B cell (primary cell): ENCODE measurements at regions of chr3 and their contacts with region 1.

Region 1: GRCh38 chr3:142578327-142579223 is at the start of gene ATR:
- DNase-seq: peak; percentile 97
- ATAC-seq: peak; percentile 94
- H3K4me3 ChIP-seq: peak within 1 kb of the TSS; percentile 70 to 91 (median 78)
- H3K4me3 Mint-ChIP-seq: peak within 1 kb of the TSS; percentile 93
- H3K27ac ChIP-seq: peak within 1 kb of the TSS; percentile 97 to 98
- H3K27ac Mint-ChIP-seq: peak within 1 kb of the TSS; percentile 98
- H3K4me1 ChIP-seq: peaks cover 27% of the 10 kb centered on the region in 2 donors
- H3K4me1 Mint-ChIP-seq: peaks cover 47% of the 10 kb centered on the region
- H3K27me3 ChIP-seq: peaks cover 0 to 7% (median 0%) of the 10 kb centered on the region in 4 experiments
- H3K27me3 Mint-ChIP-seq: peaks cover 9% of the 10 kb centered on the region
- CTCF ChIP-seq: no peak
- total RNA-seq, gene ATR: 46.7 and 47.4 TPM in 2 replicates

Region 2: GRCh38 chr3:140941434-140942220 is 1636.9 kb before region 1 on chr3 and contains the start of gene SLC25A36:
- CTCF ChIA-PET with region 1: no interaction called
- POLR2A ChIA-PET with region 1: no interaction called
- intact Hi-C with region 1: loop called (anchors 10 kb)
- DNase-seq: peak; percentile 99
- ATAC-seq: peak; percentile 96
- H3K4me3 ChIP-seq: peak within 1 kb of the TSS; percentile 63 to 86 (median 80)
- H3K4me3 Mint-ChIP-seq: peak within 1 kb of the TSS; percentile 95
- H3K27ac ChIP-seq: peak within 1 kb of the TSS; percentile 91 to 95
- H3K27ac Mint-ChIP-seq: peak within 1 kb of the TSS; percentile 97
- H3K4me1 ChIP-seq: peaks cover 11 to 26% of the 10 kb centered on the region in 2 donors
- H3K4me1 Mint-ChIP-seq: peaks cover 42% of the 10 kb centered on the region
- H3K27me3 ChIP-seq: no peaks in the 10 kb centered on the region
- H3K27me3 Mint-ChIP-seq: no peaks in the 10 kb centered on the region
- CTCF ChIP-seq: no peak
- total RNA-seq, gene SLC25A36: 76.0 and 86.3 TPM in 2 replicates

Region 3: DNA sequence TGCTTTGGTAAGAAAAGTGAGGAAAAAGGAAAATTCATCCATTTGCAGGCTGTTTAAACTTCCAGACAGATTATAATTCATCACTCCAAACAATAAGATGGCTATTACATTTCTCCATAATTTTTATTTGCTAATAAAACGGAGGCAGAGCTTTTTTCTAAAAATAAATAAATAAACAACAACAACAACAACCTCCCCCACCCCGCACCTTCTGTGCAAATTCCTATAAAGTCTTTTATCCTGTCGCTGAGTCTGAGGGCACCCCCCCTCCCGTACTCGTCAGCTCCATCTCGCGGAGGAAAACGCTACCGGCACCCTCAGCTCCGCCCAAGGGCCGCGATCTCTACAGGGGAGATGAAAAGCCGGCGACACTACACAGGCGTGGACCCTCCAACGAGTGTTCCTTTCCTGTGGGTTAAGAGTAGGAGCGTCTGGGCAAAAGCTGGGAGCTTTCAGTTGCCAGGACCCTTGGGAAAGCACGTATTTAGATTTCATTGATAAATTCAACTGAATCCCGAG is 703.1 kb before region 1 on chr3:
- CTCF ChIA-PET with region 1: no interaction called
- POLR2A ChIA-PET with region 1: no interaction called
- intact Hi-C with region 1: loop called (anchors 5 kb)
- DNase-seq: peak; percentile 87
- ATAC-seq: peak; percentile 63
- H3K4me3 ChIP-seq: peak overlapping the region; percentile 74 to 89 (median 79)
- H3K4me3 Mint-ChIP-seq: peak overlapping the region; percentile 90
- H3K27ac ChIP-seq: peak overlapping the region; percentile 90 to 98
- H3K27ac Mint-ChIP-seq: peak overlapping the region; percentile 90
- H3K4me1 ChIP-seq: peaks cover 8 to 15% of the 10 kb centered on the region in 2 donors
- H3K4me1 Mint-ChIP-seq: peaks cover 28% of the 10 kb centered on the region
- H3K27me3 ChIP-seq: no peaks in the 10 kb centered on the region
- H3K27me3 Mint-ChIP-seq: no peaks in the 10 kb centered on the region
- CTCF ChIP-seq: peak; percentile 90

Region 4: DNA sequence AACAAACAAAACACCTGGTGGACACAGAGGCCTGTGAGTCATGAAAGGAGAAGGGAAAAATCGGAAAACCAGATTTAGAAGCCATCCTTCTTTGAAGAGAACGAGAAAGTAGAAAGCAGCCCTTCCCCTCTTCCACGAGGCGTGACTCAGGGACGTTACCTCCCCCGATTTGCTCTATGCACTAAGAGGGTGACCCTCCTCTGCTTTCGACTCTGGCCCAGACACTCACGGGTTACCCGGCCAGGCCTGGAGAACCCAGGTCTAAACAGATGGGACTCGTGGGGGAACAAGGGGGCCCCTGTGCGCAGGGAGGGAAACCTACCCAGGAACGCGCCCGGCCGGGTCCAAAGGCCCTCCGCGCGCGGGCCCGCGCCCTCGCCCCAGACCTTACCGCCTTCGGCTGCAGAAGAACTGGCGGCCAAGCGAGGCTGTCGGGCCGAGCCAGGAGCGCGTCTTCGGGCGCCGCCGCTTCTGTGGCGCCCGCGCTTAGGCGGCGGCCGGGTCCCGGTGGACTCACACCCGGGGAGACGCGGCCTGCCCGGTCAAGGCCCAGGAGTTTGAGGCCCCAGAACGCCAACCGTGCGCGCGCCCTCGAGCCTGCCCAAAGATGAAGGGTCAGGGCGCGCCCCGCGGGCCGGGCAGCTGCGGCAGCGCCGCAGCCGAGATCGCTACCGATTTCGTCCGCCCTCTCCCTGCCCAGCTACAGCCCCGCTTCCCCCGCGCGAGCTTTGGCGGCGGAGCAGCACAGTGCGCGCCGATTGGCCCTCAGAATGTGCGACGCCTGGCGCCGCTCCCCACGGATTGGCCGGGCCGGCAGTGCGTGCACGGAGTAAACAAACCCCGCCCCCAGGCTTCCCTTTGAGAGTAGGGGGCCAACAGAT is 429.5 kb before region 1 on chr3 and contains the start of gene TFDP2:
- CTCF ChIA-PET with region 1: no interaction called
- POLR2A ChIA-PET with region 1: no interaction called
- intact Hi-C with region 1: loop called (anchors 2 kb)
- DNase-seq: peak; percentile 88
- ATAC-seq: peak; percentile 98
- H3K4me3 ChIP-seq: peak within 1 kb of the TSS; percentile 56 to 85 (median 74)
- H3K4me3 Mint-ChIP-seq: peak within 1 kb of the TSS; percentile 88
- H3K27ac ChIP-seq: peak within 1 kb of the TSS in 1 of 2 donors; percentile 76
- H3K27ac Mint-ChIP-seq: peak within 1 kb of the TSS; percentile 87
- H3K4me1 ChIP-seq: peaks cover 7 to 15% of the 10 kb centered on the region in 2 donors
- H3K4me1 Mint-ChIP-seq: peaks cover 19% of the 10 kb centered on the region
- H3K27me3 ChIP-seq: no peaks in the 10 kb centered on the region
- H3K27me3 Mint-ChIP-seq: no peaks in the 10 kb centered on the region
- CTCF ChIP-seq: no peak
- total RNA-seq, gene TFDP2: 31.7 and 32.9 TPM in 2 replicates

Region 5: DNA sequence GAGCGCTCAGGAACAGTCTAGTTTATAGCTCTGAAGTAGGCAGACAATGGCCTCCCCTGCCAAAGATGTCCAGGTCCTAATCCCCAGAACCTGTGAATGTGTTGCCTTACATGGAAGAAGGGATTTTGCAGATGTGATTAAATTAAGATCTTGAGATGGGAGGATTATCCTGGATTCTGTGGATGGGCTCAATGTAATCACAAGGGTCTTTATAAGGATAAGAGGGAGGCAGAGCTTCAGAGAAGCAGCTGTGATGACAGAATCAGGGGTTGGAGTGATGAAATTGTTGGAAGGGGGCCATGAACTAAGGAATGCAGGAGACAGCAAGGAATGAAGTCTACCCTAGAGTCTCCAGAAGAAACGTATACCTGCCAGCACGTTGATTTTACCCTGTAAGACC is 339.2 kb before region 1 on chr3:
- CTCF ChIA-PET with region 1: no interaction called
- POLR2A ChIA-PET with region 1: no interaction called
- intact Hi-C with region 1: no loop called
- DNase-seq: no peak
- ATAC-seq: no peak
- H3K4me3 ChIP-seq: no peak overlapping the region
- H3K4me3 Mint-ChIP-seq: no peak overlapping the region
- H3K27ac ChIP-seq: no peak overlapping the region
- H3K27ac Mint-ChIP-seq: no peak overlapping the region
- H3K4me1 ChIP-seq: no peaks in the 10 kb centered on the region
- H3K4me1 Mint-ChIP-seq: no peaks in the 10 kb centered on the region
- H3K27me3 ChIP-seq: no peaks in the 10 kb centered on the region
- H3K27me3 Mint-ChIP-seq: peaks cover 24% of the 10 kb centered on the region
- CTCF ChIP-seq: no peak

Region 6: DNA sequence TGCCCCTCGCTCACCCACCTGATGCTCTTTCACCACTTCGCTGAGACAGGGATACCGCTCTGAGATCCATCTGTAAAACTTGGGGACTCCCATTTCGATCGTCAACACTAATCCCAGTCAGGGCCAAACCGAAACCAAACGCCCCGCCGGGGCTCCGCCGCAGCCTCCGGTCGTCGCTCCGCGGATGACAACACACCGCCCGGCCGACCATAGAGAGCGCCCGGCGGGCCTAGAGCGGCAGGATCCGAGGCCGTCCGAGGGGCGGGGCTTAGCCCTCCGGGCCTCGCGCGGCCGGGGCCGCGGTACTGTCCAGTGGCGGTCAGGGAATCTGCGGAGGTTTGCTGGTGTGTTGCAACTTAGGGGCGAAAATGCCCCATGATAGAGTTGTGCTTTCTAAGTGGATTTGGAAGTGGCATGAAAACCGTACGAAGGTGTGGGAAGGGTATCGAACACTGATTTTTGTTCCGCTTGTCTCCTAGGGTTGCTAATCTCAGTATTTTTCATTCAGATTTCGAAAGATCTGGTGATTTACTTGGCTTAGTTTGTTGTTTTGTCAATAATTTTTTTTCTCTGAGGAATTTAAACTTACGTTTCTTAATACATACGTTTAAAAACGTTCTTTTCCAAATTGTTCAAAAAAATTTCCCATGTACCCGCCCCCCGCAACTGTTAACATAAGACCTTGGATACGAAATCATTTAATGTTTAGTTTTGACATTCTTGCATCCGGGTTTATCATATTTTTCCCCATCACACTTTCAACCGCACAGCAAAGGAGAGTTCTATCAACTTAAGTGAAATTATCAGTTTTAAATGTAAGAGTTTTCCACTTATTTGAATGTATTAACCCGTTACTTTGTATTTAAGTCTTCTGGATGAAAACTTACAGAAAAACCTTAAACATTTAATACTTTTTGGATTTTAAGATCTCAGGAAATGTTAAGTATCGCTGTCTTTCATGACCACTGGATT is 130.4 kb before region 1 on chr3 and contains the start of gene XRN1:
- CTCF ChIA-PET with region 1: no interaction called
- POLR2A ChIA-PET with region 1: interaction called, 5 read pairs
- intact Hi-C with region 1: loop called (anchors 1 kb)
- DNase-seq: peak; percentile 94
- ATAC-seq: peak; percentile 98
- H3K4me3 ChIP-seq: peak within 1 kb of the TSS; percentile 85 to 100 (median 98)
- H3K4me3 Mint-ChIP-seq: peak within 1 kb of the TSS; percentile 99
- H3K27ac ChIP-seq: peak within 1 kb of the TSS; percentile 97 to 100
- H3K27ac Mint-ChIP-seq: peak within 1 kb of the TSS; percentile 100
- H3K4me1 ChIP-seq: peaks cover 18 to 24% of the 10 kb centered on the region in 2 donors
- H3K4me1 Mint-ChIP-seq: peaks cover 41% of the 10 kb centered on the region
- H3K27me3 ChIP-seq: no peaks in the 10 kb centered on the region
- H3K27me3 Mint-ChIP-seq: no peaks in the 10 kb centered on the region
- CTCF ChIP-seq: no peak
- total RNA-seq, gene XRN1: 78.6 and 91.8 TPM in 2 replicates

Region 7: DNA sequence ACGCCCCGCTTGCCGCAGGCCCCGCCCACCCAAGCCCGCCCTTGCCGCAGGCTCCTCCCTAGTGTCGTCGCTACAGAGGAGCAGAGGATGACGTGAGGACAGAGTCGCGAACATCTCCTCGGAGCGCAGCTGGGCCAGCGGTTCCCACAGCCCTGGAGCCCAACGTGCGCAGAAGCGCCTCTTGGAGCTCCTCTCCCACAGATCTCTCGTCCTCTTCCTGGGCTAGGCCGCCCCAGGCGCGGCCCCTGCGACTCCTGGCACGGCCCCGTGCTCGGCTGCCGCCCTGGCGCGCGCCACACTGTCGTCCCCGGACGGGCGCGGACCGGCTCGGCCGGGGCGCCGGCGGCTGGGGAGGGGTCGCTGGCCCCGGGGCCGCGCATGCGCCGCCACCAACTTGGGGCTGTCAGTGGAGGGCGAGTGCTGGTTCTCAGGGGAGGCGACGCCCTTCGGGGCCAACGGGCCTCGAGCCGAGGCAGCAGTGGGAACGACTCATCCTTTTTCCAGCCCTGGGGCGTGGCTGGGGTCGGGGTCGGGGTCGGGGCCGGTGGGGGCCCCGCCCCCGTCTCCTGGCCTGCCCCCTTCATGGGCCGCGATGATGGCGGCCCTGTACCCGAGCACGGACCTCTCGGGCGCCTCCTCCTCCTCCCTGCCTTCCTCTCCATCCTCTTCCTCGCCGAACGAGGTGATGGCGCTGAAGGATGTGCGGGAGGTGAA is 145.6 kb after region 1 on chr3 and contains the start of gene TRPC1:
- CTCF ChIA-PET with region 1: no interaction called
- POLR2A ChIA-PET with region 1: no interaction called
- intact Hi-C with region 1: loop called (anchors 2 kb)
- DNase-seq: peak; percentile 88
- ATAC-seq: peak; percentile 93
- H3K4me3 ChIP-seq: peak within 1 kb of the TSS; percentile 44 to 76 (median 65)
- H3K4me3 Mint-ChIP-seq: peak within 1 kb of the TSS; percentile 92
- H3K27ac ChIP-seq: peak within 1 kb of the TSS in 1 of 2 donors; percentile 41
- H3K27ac Mint-ChIP-seq: peak within 1 kb of the TSS; percentile 81
- H3K4me1 ChIP-seq: peaks cover 8 to 11% of the 10 kb centered on the region in 2 donors
- H3K4me1 Mint-ChIP-seq: peaks cover 13% of the 10 kb centered on the region
- H3K27me3 ChIP-seq: peaks cover 0 to 13% (median 10%) of the 10 kb centered on the region in 4 experiments
- H3K27me3 Mint-ChIP-seq: peaks cover 33% of the 10 kb centered on the region
- CTCF ChIP-seq: no peak
- total RNA-seq, gene TRPC1: 3.3 and 3.8 TPM in 2 replicates

Region 8: GRCh38 chr3:143119009-143119914 is 540.7 kb after region 1 on chr3 and contains the start of gene CHST2:
- CTCF ChIA-PET with region 1: no interaction called
- POLR2A ChIA-PET with region 1: no interaction called
- intact Hi-C with region 1: loop called (anchors 5 kb)
- DNase-seq: peak; percentile 87
- ATAC-seq: peak; percentile 88
- H3K4me3 ChIP-seq: peak within 1 kb of the TSS; percentile 75 to 95 (median 91)
- H3K4me3 Mint-ChIP-seq: peak within 1 kb of the TSS; percentile 94
- H3K27ac ChIP-seq: peak within 1 kb of the TSS; percentile 63 to 72
- H3K27ac Mint-ChIP-seq: peak within 1 kb of the TSS; percentile 95
- H3K4me1 ChIP-seq: peaks cover 25 to 32% of the 10 kb centered on the region in 2 donors
- H3K4me1 Mint-ChIP-seq: peaks cover 31% of the 10 kb centered on the region
- H3K27me3 ChIP-seq: peaks cover 0 to 3% (median 0%) of the 10 kb centered on the region in 4 experiments
- H3K27me3 Mint-ChIP-seq: no peaks in the 10 kb centered on the region
- CTCF ChIP-seq: no peak
- total RNA-seq, gene CHST2: 24.8 and 25.0 TPM in 2 replicates